Right ventricle myocardium inferior (tissue), 1 donor: ENCODE measurements at regions of chr17 and their contacts with region 1.

Region 1: GRCh38 chr17:4986951-4987766 is at the start of gene CAMTA2:
- DNase-seq: peak; percentile 97
- ATAC-seq: peak; percentile 93
- total RNA-seq, gene CAMTA2: 37.1 TPM

Region 2: DNA sequence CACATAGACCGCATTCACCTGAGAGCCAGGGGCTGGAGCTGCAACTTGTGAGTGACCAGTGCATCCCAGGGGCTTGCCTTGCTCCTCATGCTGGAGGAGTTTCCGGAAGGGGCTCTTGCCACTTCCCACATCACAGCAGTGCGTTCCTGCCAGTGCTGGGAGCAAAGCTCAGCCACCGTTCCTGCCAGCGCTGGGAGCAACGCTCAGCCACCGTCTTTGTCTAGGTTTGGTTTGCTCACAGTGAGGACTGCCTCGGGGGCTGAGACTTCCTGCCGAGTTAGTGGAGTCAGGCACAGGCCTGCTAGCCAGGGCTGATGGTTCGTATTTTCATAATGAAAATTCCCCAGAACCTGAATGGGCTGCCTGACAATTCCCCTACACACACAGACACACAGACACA is 78.9 kb before region 1 on chr17:
- intact Hi-C with region 1: loop called (anchors 1 kb)
- DNase-seq: no peak
- ATAC-seq: peak; percentile 24

Region 3: DNA sequence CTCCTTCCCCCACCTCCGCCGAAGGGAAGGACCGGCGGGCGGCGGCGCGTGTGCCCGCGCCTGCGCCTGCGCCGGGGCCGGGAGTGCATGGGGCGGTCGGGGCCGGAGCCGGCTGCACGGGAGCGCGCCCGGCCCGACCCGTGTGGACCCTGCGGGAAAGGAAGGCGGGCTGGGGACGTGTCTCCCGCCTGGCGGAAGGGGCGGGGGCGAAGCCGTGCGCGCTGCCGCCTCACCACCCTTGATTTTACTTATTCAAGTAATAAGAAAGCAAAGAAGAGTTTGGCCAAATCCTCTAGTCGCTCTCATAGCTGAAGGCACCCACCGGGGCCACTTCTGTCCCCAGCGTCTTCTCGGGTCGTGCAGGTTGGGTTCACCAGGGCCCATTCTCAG is 38.2 kb before region 1 on chr17:
- intact Hi-C with region 1: loop called (anchors 5 kb)
- DNase-seq: peak; percentile 92
- ATAC-seq: peak; percentile 86